Heart right ventricle (tissue), 16 donors: ENCODE measurements at regions of chr6 and their contacts with region 1.

Region 1: GRCh38 chr6:56843573-56844349 is 111.1 kb upstream of the BEND6 start:
- DNase-seq: peak; percentile 67 to 78
- ATAC-seq: peak; percentile 85 to 96 (median 92)
- H3K4me3 ChIP-seq: peak overlapping the region; percentile 52 to 77 (median 70)
- H3K27ac ChIP-seq: peak overlapping the region; percentile 80 to 96 (median 91)
- H3K4me1 ChIP-seq: peaks cover 0 to 60% (median 32%) of the 10 kb centered on the region in 9 donors
- H3K27me3 ChIP-seq: peaks cover 0 to 13% (median 0%) of the 10 kb centered on the region in 7 donors
- CTCF ChIP-seq: peak; percentile 37 to 79 (median 63)

Region 2: GRCh38 chr6:56708810-56709597 is 134.8 kb before region 1 on chr6:
- intact Hi-C with region 1: loop called in 1 of 10 experiments (anchors 5 kb)
- DNase-seq: no peak
- ATAC-seq: peak in 7 of 8 donors; percentile 17 to 51 (median 31)
- H3K4me3 ChIP-seq: peak overlapping the region in 1 of 10 donors; percentile 9
- H3K27ac ChIP-seq: peak overlapping the region in 7 of 10 donors; percentile 13 to 69 (median 37)
- H3K4me1 ChIP-seq: peaks cover 0 to 48% (median 39%) of the 10 kb centered on the region in 9 donors
- H3K27me3 ChIP-seq: no peaks in the 10 kb centered on the region
- CTCF ChIP-seq: peak; percentile 50 to 79 (median 71)

Region 3: GRCh38 chr6:56764081-56764566 is 79.6 kb before region 1 on chr6:
- intact Hi-C with region 1: loop called in 8 of 10 experiments (anchors 2 to 5 kb)
- DNase-seq: no peak
- ATAC-seq: peak in 7 of 8 donors; percentile 23 to 75 (median 66)
- H3K4me3 ChIP-seq: no peak overlapping the region
- H3K27ac ChIP-seq: peak overlapping the region in 2 of 10 donors; percentile 1 to 27
- H3K4me1 ChIP-seq: peaks cover 3 to 58% (median 37%) of the 10 kb centered on the region in 9 donors
- H3K27me3 ChIP-seq: no peaks in the 10 kb centered on the region
- CTCF ChIP-seq: peak in 6 of 9 donors; percentile 16 to 48 (median 41)

Region 4: GRCh38 chr6:56808871-56809359 is 34.8 kb before region 1 on chr6:
- intact Hi-C with region 1: loop called in 2 of 10 experiments (anchors 5 kb)
- DNase-seq: no peak
- ATAC-seq: peak; percentile 22 to 79 (median 50)
- H3K4me3 ChIP-seq: no peak overlapping the region
- H3K27ac ChIP-seq: peak overlapping the region in 7 of 10 donors; percentile 21 to 68 (median 52)
- H3K4me1 ChIP-seq: peaks cover 4 to 75% (median 48%) of the 10 kb centered on the region in 9 donors
- H3K27me3 ChIP-seq: no peaks in the 10 kb centered on the region
- CTCF ChIP-seq: no peak